ENCODE measurements at regions of chr2 and their contacts with region 1.

Region 1: DNA sequence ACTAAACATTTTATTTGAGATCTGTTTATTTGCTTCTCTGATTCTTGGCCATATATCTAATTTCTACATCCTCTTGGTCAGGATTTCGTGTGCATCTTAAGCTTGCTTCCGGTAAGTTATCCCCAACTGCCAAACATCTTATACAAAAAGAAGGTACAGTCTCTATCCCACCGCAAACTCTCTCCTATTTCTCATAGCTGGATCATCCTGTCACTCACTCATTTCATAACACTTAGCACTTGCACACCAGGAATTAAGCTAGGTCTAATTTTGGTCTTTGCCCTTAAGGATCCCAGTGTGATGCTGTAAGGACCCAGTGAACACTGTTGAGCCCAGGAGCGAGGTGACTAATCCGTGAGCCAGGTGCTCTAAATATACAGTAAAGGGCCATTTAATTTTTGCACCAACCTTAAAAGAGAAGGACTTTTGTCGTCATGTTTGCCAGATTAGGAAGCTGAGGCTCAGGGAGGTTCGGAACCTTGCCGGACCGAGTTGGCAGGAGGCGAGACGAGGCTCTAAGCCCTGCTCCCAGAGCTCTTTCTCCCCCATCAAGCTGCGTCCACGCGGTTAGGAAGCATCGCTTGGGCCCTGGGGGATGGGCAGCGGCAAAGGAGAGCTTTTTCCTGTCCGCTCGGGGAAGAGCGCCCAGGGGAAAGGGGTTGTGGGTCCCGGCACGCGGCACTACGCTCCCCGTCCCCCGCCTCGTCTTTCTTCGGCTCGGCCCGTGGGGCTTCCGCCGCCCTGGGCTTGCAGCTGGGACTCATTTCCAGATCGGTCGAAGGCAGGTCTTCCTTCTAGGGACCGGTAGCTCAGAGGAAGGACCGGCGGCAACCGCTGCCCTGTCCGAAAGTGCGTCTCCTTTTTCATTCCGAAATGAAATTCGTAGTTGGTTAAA is 4.1 kb upstream of the ITPRIPL1 start:
- DNase-seq: peak; percentile 42
- H3K4me3 Mint-ChIP-seq: peak overlapping the region; percentile 79
- H3K27ac Mint-ChIP-seq: peak overlapping the region; percentile 83
- H3K4me1 Mint-ChIP-seq: peaks cover 69% of the 10 kb centered on the region
- H3K27me3 Mint-ChIP-seq: no peaks in the 10 kb centered on the region

Region 2: DNA sequence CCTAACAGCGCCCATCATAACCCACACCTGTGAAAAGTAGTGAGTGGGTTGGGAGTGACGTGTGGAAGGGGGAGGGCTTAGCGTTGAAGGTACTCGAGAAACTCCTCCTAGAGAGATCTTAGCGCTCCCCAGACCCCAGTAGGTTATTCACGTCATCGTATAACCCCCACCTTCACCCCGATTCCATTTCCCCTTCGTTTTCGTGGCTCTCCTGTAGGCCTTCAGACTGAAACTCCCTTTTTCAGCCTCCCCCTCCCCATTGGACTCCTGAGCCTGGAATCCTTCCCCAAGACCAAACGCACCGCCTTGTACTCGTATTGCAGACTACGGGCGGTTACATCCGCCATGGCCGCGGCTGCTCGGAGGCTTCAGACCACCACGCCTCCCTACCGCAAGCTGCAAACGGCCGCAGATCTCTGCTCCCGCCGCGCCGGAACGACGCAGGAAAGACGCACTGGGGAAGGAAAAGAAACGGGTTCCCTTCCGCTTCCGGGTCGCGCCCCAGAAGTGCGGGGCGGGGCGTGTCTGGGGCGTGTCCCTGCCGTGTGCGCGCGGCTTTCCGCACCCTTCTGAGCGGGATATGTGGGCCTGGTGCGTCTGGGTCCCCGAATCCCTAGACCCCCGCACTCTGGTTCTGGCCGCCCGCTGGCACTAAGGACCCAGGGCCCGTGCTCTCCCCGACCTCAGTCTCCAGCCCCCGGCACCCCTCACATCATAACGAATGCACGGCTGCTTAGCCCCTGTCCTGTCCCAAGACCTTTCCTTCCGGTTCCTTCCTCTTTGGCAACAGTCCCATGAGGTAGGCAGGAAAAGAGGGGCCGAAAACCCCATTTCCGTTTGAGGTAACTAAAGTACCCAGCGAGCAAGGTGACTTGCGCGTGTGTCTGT is 15.6 kb before region 1 on chr2 and contains the start of gene SNRNP200:
- CTCF ChIA-PET with region 1: interaction called, 21 read pairs
- POLR2A ChIA-PET with region 1: interaction called, 5 read pairs
- DNase-seq: peak; percentile 92
- H3K4me3 Mint-ChIP-seq: peak within 1 kb of the TSS; percentile 97
- H3K27ac Mint-ChIP-seq: peak within 1 kb of the TSS; percentile 98
- H3K4me1 Mint-ChIP-seq: peaks cover 65% of the 10 kb centered on the region
- H3K27me3 Mint-ChIP-seq: no peaks in the 10 kb centered on the region
- total RNA-seq, gene SNRNP200: 170 to 178 TPM

Region 3: DNA sequence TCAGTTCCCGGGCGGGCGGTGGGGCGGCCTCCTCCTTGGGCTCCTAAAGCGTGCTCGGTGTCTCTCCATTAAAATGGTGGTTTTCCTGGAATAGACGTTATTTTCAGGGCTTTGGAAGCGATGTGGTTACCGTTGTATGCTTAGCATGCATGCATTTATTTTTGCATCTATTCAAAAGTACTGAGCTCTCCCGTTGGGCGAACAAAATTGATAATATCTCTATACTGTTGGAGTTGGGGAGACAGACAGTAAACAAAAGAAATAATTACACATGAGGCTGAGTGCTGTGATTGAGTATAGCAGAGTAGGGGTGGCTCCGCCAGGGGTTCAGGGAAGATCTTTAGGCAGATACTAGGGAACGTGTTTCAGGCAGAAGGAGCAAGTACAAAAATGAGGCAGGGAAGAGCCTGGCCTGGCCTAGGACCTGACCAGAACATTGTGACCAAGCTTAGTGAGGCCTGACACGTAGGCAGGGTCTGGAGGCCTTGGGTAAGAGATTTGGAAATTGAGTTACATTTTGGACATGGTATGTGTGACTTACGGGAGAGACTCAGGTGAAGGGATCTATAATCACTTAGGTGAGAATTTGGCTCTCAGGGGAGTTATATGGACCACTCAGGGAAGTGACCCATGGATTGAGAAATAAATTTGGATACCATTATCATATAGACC is 15.3 kb after region 1 on chr2:
- CTCF ChIA-PET with region 1: interaction called, 47 read pairs
- POLR2A ChIA-PET with region 1: interaction called, 5 read pairs
- DNase-seq: no peak
- H3K4me3 Mint-ChIP-seq: peak overlapping the region; percentile 87
- H3K27ac Mint-ChIP-seq: peak overlapping the region; percentile 95
- H3K4me1 Mint-ChIP-seq: peaks cover 61% of the 10 kb centered on the region
- H3K27me3 Mint-ChIP-seq: no peaks in the 10 kb centered on the region

Region 4: GRCh38 chr2:96407041-96407918 is 86.3 kb after region 1 on chr2:
- CTCF ChIA-PET with region 1: no interaction called
- POLR2A ChIA-PET with region 1: no interaction called
- DNase-seq: peak; percentile 84
- H3K4me3 Mint-ChIP-seq: peak overlapping the region; percentile 57
- H3K27ac Mint-ChIP-seq: peak overlapping the region; percentile 92
- H3K4me1 Mint-ChIP-seq: peaks cover 35% of the 10 kb centered on the region
- H3K27me3 Mint-ChIP-seq: no peaks in the 10 kb centered on the region

Region 5: DNA sequence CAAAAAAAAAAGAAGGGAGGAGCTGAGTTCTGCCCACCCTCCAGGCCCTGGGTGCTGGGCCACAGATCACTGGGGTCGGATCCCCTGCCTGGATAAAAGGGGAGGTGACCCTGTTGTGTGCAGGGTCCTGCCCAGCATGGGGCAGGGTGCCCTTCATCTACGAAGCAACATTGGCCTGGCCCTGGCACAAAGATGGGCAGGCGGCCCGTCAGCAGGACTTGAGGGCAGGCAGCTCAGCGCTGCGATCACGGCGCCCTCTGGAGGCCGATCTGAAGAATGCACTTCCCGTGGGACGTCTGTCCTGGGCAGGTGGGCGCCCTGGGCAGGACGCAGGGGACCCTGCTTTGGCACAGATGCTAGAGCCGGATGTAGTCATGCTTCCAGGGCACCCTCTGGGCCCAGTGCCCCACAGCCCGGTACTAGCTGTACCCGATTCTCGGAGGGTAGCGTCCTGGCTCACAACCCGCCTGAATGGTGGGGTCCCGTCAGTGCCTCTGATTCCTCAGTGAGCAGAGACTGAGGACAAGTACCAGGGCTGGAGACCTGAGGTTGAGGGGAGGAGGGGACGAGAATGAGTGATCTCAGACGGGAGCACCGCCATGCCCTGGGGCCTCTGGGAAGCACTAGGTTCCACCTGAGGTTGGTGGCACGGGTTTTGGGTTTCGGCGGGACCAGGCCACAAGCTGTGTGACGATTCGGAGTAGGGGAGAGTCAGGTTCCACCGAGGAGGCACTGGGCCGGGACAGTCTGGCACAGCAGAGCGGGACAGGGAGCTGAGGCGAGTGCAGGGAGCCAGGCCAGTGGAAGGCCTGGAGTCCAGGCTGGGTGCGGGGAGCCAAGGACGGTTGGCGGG is 233.5 kb after region 1 on chr2:
- CTCF ChIA-PET with region 1: no interaction called
- POLR2A ChIA-PET with region 1: no interaction called
- DNase-seq: peak; percentile 70
- H3K4me3 Mint-ChIP-seq: no peak overlapping the region
- H3K27ac Mint-ChIP-seq: peak overlapping the region; percentile 62
- H3K4me1 Mint-ChIP-seq: peaks cover 28% of the 10 kb centered on the region
- H3K27me3 Mint-ChIP-seq: no peaks in the 10 kb centered on the region

Measured in activated CD4-positive, alpha-beta T cell treated with anti-CD3 and anti-CD28 coated beads, Interleukin-2, amount 10 ng/mL, durations not matched to agents 7 days and 5 days (primary cell).